HCT116 (cell line): ENCODE measurements at regions of chr18 and their contacts with region 1.

Region 1: GRCh38 chr18:23703057-23703986 is 14.1 kb downstream of the LAMA3 start:
- DNase-seq: peak; percentile 71
- ATAC-seq: peak; percentile 96
- H3K4me3 ChIP-seq: no peak overlapping the region
- H3K27ac ChIP-seq: no peak overlapping the region
- H3K4me1 ChIP-seq: peaks cover 11 to 19% of the 10 kb centered on the region in 2 experiments
- H3K27me3 ChIP-seq: no peaks in the 10 kb centered on the region
- CTCF ChIP-seq: peak; percentile 53 to 94 (median 75)
- POLR2A ChIP-seq: no peak
- RAD21 ChIP-seq: peak; percentile 98

Region 2: GRCh38 chr18:23503038-23503962 is 200.0 kb before region 1 on chr18 and contains the start of gene RMC1:
- CTCF ChIA-PET with region 1: interaction called, 19 read pairs
- POLR2A ChIA-PET with region 1: no interaction called
- RAD21 ChIA-PET with region 1: interaction called, 6 to 7 read pairs
- intact Hi-C with region 1: loop called (anchors 2 kb)
- DNase-seq: peak; percentile 81
- ATAC-seq: peak; percentile 85
- H3K4me3 ChIP-seq: peak within 1 kb of the TSS; percentile 79 to 92
- H3K27ac ChIP-seq: peak within 1 kb of the TSS; percentile 70
- H3K4me1 ChIP-seq: peaks cover 10 to 33% of the 10 kb centered on the region in 2 experiments; a peak in 3 of 4 replicates
- H3K27me3 ChIP-seq: no peaks in the 10 kb centered on the region
- CTCF ChIP-seq: no peak
- POLR2A ChIP-seq: peak; percentile 76
- RAD21 ChIP-seq: peak; percentile 23; the same call in 1 of the 2 replicates
- total RNA-seq, gene RMC1: 38.4 TPM

Region 3: GRCh38 chr18:23547846-23548245 is 155.5 kb before region 1 on chr18:
- CTCF ChIA-PET with region 1: interaction called, 11 read pairs
- POLR2A ChIA-PET with region 1: no interaction called
- RAD21 ChIA-PET with region 1: interaction called in 1 of 2 experiments, 4 read pairs
- intact Hi-C with region 1: no loop called
- DNase-seq: peak; percentile 19
- ATAC-seq: peak; percentile 85
- H3K4me3 ChIP-seq: no peak overlapping the region
- H3K27ac ChIP-seq: peak overlapping the region; percentile 44; the same call in 1 of the 2 replicates
- H3K4me1 ChIP-seq: peaks cover 18 to 33% of the 10 kb centered on the region in 2 experiments
- H3K27me3 ChIP-seq: no peaks in the 10 kb centered on the region
- CTCF ChIP-seq: no peak
- POLR2A ChIP-seq: no peak
- RAD21 ChIP-seq: no peak

Region 4: GRCh38 chr18:23629444-23629946 is 73.8 kb before region 1 on chr18:
- CTCF ChIA-PET with region 1: interaction called, 178 read pairs
- POLR2A ChIA-PET with region 1: interaction called, 4 read pairs
- RAD21 ChIA-PET with region 1: interaction called, 10 to 18 read pairs
- intact Hi-C with region 1: no loop called
- DNase-seq: no peak
- ATAC-seq: peak; percentile 47
- H3K4me3 ChIP-seq: no peak overlapping the region
- H3K27ac ChIP-seq: no peak overlapping the region
- H3K4me1 ChIP-seq: peaks cover 39 to 43% of the 10 kb centered on the region in 2 experiments
- H3K27me3 ChIP-seq: no peaks in the 10 kb centered on the region
- CTCF ChIP-seq: no peak
- POLR2A ChIP-seq: no peak
- RAD21 ChIP-seq: no peak

Region 5: GRCh38 chr18:23667114-23667513 is 36.2 kb before region 1 on chr18:
- CTCF ChIA-PET with region 1: interaction called, 16 read pairs
- POLR2A ChIA-PET with region 1: no interaction called
- RAD21 ChIA-PET with region 1: no interaction called
- intact Hi-C with region 1: no loop called
- DNase-seq: no peak
- ATAC-seq: no peak
- H3K4me3 ChIP-seq: no peak overlapping the region
- H3K27ac ChIP-seq: no peak overlapping the region
- H3K4me1 ChIP-seq: peaks cover 0 to 9% of the 10 kb centered on the region in 2 experiments; a peak in 2 of 4 replicates
- H3K27me3 ChIP-seq: no peaks in the 10 kb centered on the region
- CTCF ChIP-seq: peak in 2 of 3 experiments; percentile 23 to 30; a peak in 1 of 6 replicates
- POLR2A ChIP-seq: no peak
- RAD21 ChIP-seq: peak; percentile 63

Region 6: DNA sequence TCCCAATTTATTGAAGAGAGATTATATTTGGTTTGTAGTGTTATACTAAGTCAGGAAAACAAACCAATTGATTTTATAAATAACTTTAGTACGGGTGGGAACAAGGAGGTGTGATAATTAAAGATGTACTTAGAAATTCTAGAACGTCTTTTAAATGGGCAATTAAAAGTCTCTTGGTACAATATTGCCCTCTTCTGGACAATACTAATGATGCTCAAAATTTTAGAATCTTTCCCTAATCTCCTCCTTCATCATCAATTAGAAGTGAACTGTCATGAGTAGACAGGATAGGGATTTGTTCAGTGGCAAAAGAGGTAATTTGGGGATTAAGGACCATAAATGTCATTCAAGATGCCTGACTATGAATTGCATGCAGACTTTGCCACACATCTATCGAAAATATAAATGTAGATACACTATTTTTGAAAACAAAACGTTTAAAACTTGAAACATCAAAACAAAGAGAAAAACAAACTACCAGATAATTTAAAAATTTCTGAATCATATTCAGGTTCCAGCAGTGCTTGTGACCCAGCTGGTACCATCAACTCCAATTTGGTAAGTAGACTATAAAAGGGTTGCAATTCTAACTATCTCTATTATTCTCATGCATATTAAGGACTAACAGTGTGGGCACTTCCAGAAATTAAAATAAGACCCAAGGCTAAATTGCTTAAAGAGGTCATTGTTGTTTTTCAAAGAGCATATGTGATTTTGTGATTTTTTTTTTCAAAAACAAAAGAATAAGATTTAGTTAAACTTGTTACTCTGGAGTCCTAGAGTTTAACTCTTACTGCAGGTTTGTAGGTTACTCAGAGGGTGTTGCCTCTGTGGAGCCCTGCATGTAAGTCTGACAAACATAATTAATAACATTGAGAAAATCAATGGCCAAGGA is 109.5 kb after region 1 on chr18:
- CTCF ChIA-PET with region 1: interaction called, 12 read pairs
- POLR2A ChIA-PET with region 1: no interaction called
- RAD21 ChIA-PET with region 1: interaction called in 1 of 2 experiments, 3 read pairs
- intact Hi-C with region 1: loop called (anchors 2 kb)
- DNase-seq: peak; percentile 15
- ATAC-seq: peak; percentile 57
- H3K4me3 ChIP-seq: no peak overlapping the region
- H3K27ac ChIP-seq: no peak overlapping the region
- H3K4me1 ChIP-seq: no peaks in the 10 kb centered on the region
- H3K27me3 ChIP-seq: no peaks in the 10 kb centered on the region
- CTCF ChIP-seq: peak; percentile 33 to 65 (median 58); a peak in 5 of 6 replicates
- POLR2A ChIP-seq: no peak
- RAD21 ChIP-seq: peak; percentile 76